Activated CD4-positive, alpha-beta T cell treated with anti-CD3 and anti-CD28 coated beads for 36 hours (primary cell): ENCODE measurements at regions of chr12 and their contacts with region 1.

Region 1: GRCh38 chr12:89352492-89353187 is at the start of gene DUSP6:
- DNase-seq: peak; percentile 96
- ATAC-seq: peak; percentile 83
- H3K4me3 Mint-ChIP-seq: peak within 1 kb of the TSS; percentile 86
- H3K27ac Mint-ChIP-seq: peak within 1 kb of the TSS; percentile 92
- H3K4me1 Mint-ChIP-seq: peaks cover 46% of the 10 kb centered on the region
- H3K27me3 Mint-ChIP-seq: no peaks in the 10 kb centered on the region
- total RNA-seq, gene DUSP6: 49.9 to 60.9 TPM

Region 2: GRCh38 chr12:89019408-89020120 is 333.1 kb before region 1 on chr12:
- CTCF ChIA-PET with region 1: interaction called, 7 read pairs
- POLR2A ChIA-PET with region 1: interaction called, 4 read pairs
- intact Hi-C with region 1: loop called (anchors 1 kb)
- DNase-seq: peak; percentile 82
- ATAC-seq: peak; percentile 88
- H3K4me3 Mint-ChIP-seq: no peak overlapping the region
- H3K27ac Mint-ChIP-seq: no peak overlapping the region
- H3K4me1 Mint-ChIP-seq: peaks cover 16% of the 10 kb centered on the region
- H3K27me3 Mint-ChIP-seq: peaks cover 4% of the 10 kb centered on the region

Region 3: DNA sequence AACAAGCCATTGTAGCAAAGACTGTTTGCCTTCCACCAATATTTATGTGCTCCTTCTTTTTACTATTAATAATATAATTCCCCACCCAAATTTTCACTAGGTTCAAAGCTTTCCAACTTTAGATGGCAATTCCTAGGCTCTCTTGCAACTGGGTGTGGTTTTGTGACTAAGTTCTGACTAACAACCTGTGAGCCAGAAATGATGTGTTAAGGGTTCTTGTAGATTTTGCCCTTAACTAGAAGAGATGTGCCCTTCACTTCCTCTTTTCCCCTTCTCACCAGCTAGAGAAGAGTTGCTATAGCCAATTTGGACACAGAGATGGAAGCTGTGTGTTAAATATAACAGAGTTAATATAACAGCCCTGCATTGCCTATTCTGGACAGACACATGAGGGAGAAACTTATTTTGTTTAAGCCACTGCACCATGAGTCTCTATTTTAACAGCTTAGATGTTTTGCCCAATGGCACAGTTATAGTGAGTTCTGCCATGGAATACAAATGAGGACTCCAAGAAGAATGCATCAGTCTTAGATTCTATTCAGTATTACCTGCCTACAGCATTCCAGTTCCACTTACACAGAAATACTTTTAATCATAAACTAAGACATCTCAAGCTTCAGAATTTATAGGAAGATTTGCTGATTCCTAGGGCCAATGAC is 216.5 kb before region 1 on chr12:
- CTCF ChIA-PET with region 1: no interaction called
- POLR2A ChIA-PET with region 1: no interaction called
- intact Hi-C with region 1: loop called (anchors 2 to 5 kb)
- DNase-seq: peak; percentile 10
- ATAC-seq: peak; percentile 60
- H3K4me3 Mint-ChIP-seq: no peak overlapping the region
- H3K27ac Mint-ChIP-seq: no peak overlapping the region
- H3K4me1 Mint-ChIP-seq: peaks cover 30% of the 10 kb centered on the region
- H3K27me3 Mint-ChIP-seq: peaks cover 8% of the 10 kb centered on the region

Region 4: GRCh38 chr12:89244536-89244935 is 108.1 kb before region 1 on chr12:
- CTCF ChIA-PET with region 1: interaction called, 3 read pairs
- POLR2A ChIA-PET with region 1: interaction called, 6 read pairs
- intact Hi-C with region 1: loop called (anchors 2 kb)
- DNase-seq: peak; percentile 48
- ATAC-seq: peak; percentile 88
- H3K4me3 Mint-ChIP-seq: peak overlapping the region; percentile 27
- H3K27ac Mint-ChIP-seq: peak overlapping the region; percentile 84
- H3K4me1 Mint-ChIP-seq: peaks cover 38% of the 10 kb centered on the region
- H3K27me3 Mint-ChIP-seq: no peaks in the 10 kb centered on the region

Region 5: GRCh38 chr12:89333564-89334252 is 18.9 kb before region 1 on chr12:
- CTCF ChIA-PET with region 1: no interaction called
- POLR2A ChIA-PET with region 1: no interaction called
- intact Hi-C with region 1: no loop called
- DNase-seq: peak; percentile 55
- ATAC-seq: peak; percentile 98
- H3K4me3 Mint-ChIP-seq: peak overlapping the region; percentile 30
- H3K27ac Mint-ChIP-seq: peak overlapping the region; percentile 4
- H3K4me1 Mint-ChIP-seq: peaks cover 20% of the 10 kb centered on the region
- H3K27me3 Mint-ChIP-seq: no peaks in the 10 kb centered on the region

Region 6: DNA sequence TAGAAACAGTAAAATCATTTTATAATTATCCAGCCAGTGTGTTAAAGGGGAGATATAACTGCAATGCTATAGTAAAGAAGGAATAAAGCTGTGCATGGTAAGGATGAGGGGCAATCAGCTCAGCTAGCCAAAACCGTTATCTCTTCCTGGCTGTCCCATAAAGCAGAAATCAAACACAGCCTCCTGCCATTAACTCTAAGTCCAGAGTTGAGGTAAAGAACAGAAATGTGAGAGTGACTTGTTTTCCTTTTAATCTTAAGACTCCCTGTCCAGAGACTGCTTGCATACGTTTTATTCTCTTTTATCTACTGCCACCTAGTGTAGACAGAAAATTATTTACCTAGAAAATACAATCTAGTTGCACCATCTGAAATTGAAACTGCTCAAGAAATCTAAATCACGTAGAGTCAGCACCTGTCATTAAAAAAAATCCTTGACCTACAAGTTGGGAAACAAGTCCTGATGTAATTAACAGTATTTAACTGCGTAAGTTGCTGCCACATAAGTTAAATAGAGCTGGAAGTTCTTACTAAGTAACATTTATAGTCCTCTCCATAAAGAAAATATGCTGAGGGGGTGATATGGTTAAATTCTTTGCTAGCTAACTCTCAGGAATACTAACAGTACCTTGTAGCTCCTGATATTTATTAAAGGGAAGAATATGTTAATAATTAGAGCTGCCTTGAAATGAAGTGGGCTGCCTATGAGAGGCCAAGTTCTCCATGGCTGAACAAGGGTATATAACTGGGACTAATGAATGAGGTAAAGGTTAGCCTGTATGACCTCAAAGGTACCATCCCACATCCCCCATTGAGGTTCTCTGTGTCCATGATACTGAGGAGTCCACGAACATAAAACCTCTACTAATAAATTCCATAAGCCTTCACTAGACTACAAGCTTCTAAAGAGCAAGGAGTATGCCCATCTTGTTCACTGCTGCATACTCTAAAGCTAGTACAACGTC is 109.3 kb after region 1 on chr12:
- CTCF ChIA-PET with region 1: interaction called, 6 read pairs
- POLR2A ChIA-PET with region 1: no interaction called
- intact Hi-C with region 1: loop called (anchors 2 kb)
- DNase-seq: no peak
- ATAC-seq: peak; percentile 93
- H3K4me3 Mint-ChIP-seq: peak overlapping the region; percentile 13
- H3K27ac Mint-ChIP-seq: peak overlapping the region; percentile 68
- H3K4me1 Mint-ChIP-seq: peaks cover 20% of the 10 kb centered on the region
- H3K27me3 Mint-ChIP-seq: no peaks in the 10 kb centered on the region

Region 7: GRCh38 chr12:89709157-89709994 is 356.7 kb after region 1 on chr12:
- CTCF ChIA-PET with region 1: no interaction called
- POLR2A ChIA-PET with region 1: no interaction called
- intact Hi-C with region 1: loop called in 1 of 2 experiments (anchors 1 kb)
- DNase-seq: peak; percentile 99
- ATAC-seq: peak; percentile 81
- H3K4me3 Mint-ChIP-seq: peak overlapping the region; percentile 79
- H3K27ac Mint-ChIP-seq: peak overlapping the region; percentile 84
- H3K4me1 Mint-ChIP-seq: peaks cover 30% of the 10 kb centered on the region
- H3K27me3 Mint-ChIP-seq: no peaks in the 10 kb centered on the region